CD4-positive, alpha-beta memory T cell (primary cell): ENCODE measurements at regions of chr2 and their contacts with region 1.

Region 1: DNA sequence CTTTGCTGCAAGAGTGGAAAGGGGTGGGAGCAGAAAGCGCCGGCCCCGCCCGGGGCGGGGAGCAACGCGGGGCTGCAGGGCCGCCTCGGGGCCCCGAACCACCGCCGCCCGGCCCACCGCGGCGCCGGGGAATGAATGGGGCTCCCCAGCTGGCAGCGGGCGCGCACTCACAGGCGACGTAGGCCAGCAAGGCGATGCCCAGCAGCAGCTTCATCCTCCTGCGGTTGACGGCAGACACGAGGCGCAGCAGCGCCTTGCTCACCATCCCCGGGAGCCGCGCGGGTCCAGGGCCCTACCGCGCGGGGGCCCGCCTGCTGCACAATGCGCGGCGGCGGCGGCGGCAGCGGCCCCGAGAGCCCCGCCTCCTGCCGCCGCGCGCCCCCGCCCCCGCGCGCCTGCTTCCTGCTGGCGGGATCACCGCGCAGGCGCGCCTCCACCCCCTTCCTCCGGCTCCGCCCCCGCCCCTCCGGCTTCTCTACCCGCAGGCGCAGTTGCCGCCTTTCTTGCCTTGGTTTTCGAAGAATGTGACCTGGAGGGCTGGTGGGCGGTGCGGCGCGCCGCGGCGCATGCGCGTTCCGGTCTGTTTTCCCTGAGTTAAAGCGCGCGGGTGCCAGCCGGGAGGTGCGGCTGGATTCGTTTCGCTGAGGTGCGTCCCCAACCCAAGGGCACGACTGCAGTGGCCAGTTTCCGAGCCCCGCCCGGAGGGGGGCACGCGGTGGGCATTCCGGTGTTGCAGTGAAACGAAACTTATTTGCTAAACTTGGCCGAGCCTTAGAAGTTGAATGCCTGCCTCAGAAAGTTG is at the start of gene UXS1:
- DNase-seq: peak; percentile 97 to 98 (median 98)
- H3K4me3 ChIP-seq: peak within 1 kb of the TSS; percentile 91 to 92
- H3K4me3 Mint-ChIP-seq: peak within 1 kb of the TSS; percentile 92 to 98 (median 96)
- H3K27ac ChIP-seq: peak within 1 kb of the TSS; percentile 76
- H3K27ac Mint-ChIP-seq: peak within 1 kb of the TSS; percentile 92 to 97 (median 94)
- H3K4me1 ChIP-seq: peaks cover 50% of the 10 kb centered on the region
- H3K4me1 Mint-ChIP-seq: peaks cover 35 to 48% (median 41%) of the 10 kb centered on the region in 4 donors
- H3K27me3 ChIP-seq: no peaks in the 10 kb centered on the region
- H3K27me3 Mint-ChIP-seq: no peaks in the 10 kb centered on the region
- total RNA-seq, gene UXS1: 143 to 150 TPM

Region 2: GRCh38 chr2:105337124-105338019 is 856.8 kb before region 1 on chr2 and contains the start of gene C2orf49:
- CTCF ChIA-PET with region 1: no interaction called
- POLR2A ChIA-PET with region 1: no interaction called
- intact Hi-C with region 1: loop called (anchors 10 kb)
- DNase-seq: peak; percentile 91 to 93 (median 91)
- H3K4me3 ChIP-seq: peak within 1 kb of the TSS; percentile 92 to 93
- H3K4me3 Mint-ChIP-seq: peak within 1 kb of the TSS; percentile 95 to 100 (median 99)
- H3K27ac ChIP-seq: peak within 1 kb of the TSS; percentile 99
- H3K27ac Mint-ChIP-seq: peak within 1 kb of the TSS; percentile 99 to 100 (median 100)
- H3K4me1 ChIP-seq: peaks cover 28% of the 10 kb centered on the region
- H3K4me1 Mint-ChIP-seq: peaks cover 22 to 46% (median 33%) of the 10 kb centered on the region in 4 donors
- H3K27me3 ChIP-seq: no peaks in the 10 kb centered on the region
- H3K27me3 Mint-ChIP-seq: no peaks in the 10 kb centered on the region
- total RNA-seq, gene C2orf49: 29.5 to 29.9 TPM

Region 3: GRCh38 chr2:106104332-106105062 is 89.7 kb before region 1 on chr2:
- CTCF ChIA-PET with region 1: interaction called, 10 read pairs
- POLR2A ChIA-PET with region 1: interaction called, 5 read pairs
- intact Hi-C with region 1: no loop called
- DNase-seq: peak; percentile 68 to 74 (median 72)
- H3K4me3 ChIP-seq: no peak overlapping the region
- H3K4me3 Mint-ChIP-seq: no peak overlapping the region
- H3K27ac ChIP-seq: no peak overlapping the region
- H3K27ac Mint-ChIP-seq: peak overlapping the region; percentile 26 to 79 (median 72)
- H3K4me1 ChIP-seq: peaks cover 13% of the 10 kb centered on the region
- H3K4me1 Mint-ChIP-seq: peaks cover 5 to 18% (median 15%) of the 10 kb centered on the region in 4 donors
- H3K27me3 ChIP-seq: no peaks in the 10 kb centered on the region
- H3K27me3 Mint-ChIP-seq: no peaks in the 10 kb centered on the region

Region 4: DNA sequence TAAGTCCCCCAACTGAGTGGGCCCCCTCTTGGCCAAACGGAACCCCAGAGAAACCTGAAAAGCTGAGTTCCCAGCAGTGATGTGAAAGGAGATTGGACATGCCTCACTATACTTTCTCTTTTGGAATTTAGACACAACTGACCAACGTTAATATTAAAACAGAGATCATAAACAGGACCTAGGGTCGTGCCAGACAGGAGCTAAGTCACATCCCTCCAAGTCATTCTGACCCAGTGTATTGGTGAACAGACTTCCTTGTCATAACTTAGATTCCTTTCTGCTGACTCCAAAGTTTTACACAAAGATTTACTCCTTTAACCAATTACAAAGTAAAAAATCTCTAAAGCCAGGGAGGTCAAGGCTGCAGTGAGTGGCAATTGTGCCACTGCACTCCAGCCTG is 47.0 kb before region 1 on chr2:
- CTCF ChIA-PET with region 1: no interaction called
- POLR2A ChIA-PET with region 1: interaction called, 4 read pairs
- intact Hi-C with region 1: loop called (anchors 10 kb)
- DNase-seq: no peak
- H3K4me3 ChIP-seq: no peak overlapping the region
- H3K4me3 Mint-ChIP-seq: peak overlapping the region in 7 of 8 donors; percentile 29 to 79 (median 62)
- H3K27ac ChIP-seq: peak overlapping the region; percentile 28
- H3K27ac Mint-ChIP-seq: peak overlapping the region; percentile 74 to 97 (median 93)
- H3K4me1 ChIP-seq: peaks cover 75% of the 10 kb centered on the region
- H3K4me1 Mint-ChIP-seq: peaks cover 54 to 86% (median 67%) of the 10 kb centered on the region in 4 donors
- H3K27me3 ChIP-seq: no peaks in the 10 kb centered on the region
- H3K27me3 Mint-ChIP-seq: no peaks in the 10 kb centered on the region

Region 5: DNA sequence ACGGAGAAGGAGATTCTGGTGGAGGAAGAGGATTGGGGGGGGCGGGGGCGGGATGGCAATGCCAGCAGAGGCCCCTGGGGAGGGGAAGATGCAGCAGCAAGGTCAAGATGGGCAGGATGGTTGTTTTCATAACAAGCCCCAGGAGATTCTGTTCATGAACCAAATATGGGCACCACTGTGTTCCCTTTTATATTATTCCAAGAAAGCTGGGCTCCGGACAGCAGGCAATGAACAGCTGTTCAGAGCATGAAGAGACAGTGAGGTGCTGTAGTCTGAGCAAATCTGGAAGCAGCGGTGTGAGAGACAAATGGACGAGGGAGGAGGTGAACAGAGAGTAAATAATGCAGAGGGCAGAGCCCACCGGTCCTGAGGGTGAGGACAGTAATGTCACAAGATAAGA is 20.1 kb before region 1 on chr2:
- CTCF ChIA-PET with region 1: no interaction called
- POLR2A ChIA-PET with region 1: no interaction called
- intact Hi-C with region 1: no loop called
- DNase-seq: no peak
- H3K4me3 ChIP-seq: no peak overlapping the region
- H3K4me3 Mint-ChIP-seq: no peak overlapping the region
- H3K27ac ChIP-seq: no peak overlapping the region
- H3K27ac Mint-ChIP-seq: peak overlapping the region in 6 of 7 donors; percentile 30 to 66 (median 49)
- H3K4me1 ChIP-seq: peaks cover 20% of the 10 kb centered on the region
- H3K4me1 Mint-ChIP-seq: peaks cover 31 to 66% (median 47%) of the 10 kb centered on the region in 4 donors
- H3K27me3 ChIP-seq: no peaks in the 10 kb centered on the region
- H3K27me3 Mint-ChIP-seq: no peaks in the 10 kb centered on the region

Region 6: GRCh38 chr2:106366204-106366885 is 172.2 kb after region 1 on chr2:
- CTCF ChIA-PET with region 1: no interaction called
- POLR2A ChIA-PET with region 1: no interaction called
- intact Hi-C with region 1: no loop called
- DNase-seq: no peak
- H3K4me3 ChIP-seq: no peak overlapping the region
- H3K4me3 Mint-ChIP-seq: no peak overlapping the region
- H3K27ac ChIP-seq: no peak overlapping the region
- H3K27ac Mint-ChIP-seq: no peak overlapping the region
- H3K4me1 ChIP-seq: no peaks in the 10 kb centered on the region
- H3K4me1 Mint-ChIP-seq: no peaks in the 10 kb centered on the region
- H3K27me3 ChIP-seq: no peaks in the 10 kb centered on the region
- H3K27me3 Mint-ChIP-seq: peaks cover 3 to 5% of the 10 kb centered on the region in 2 donors